ENCODE measurements at regions of chr6 and their contacts with region 1.

Region 1: DNA sequence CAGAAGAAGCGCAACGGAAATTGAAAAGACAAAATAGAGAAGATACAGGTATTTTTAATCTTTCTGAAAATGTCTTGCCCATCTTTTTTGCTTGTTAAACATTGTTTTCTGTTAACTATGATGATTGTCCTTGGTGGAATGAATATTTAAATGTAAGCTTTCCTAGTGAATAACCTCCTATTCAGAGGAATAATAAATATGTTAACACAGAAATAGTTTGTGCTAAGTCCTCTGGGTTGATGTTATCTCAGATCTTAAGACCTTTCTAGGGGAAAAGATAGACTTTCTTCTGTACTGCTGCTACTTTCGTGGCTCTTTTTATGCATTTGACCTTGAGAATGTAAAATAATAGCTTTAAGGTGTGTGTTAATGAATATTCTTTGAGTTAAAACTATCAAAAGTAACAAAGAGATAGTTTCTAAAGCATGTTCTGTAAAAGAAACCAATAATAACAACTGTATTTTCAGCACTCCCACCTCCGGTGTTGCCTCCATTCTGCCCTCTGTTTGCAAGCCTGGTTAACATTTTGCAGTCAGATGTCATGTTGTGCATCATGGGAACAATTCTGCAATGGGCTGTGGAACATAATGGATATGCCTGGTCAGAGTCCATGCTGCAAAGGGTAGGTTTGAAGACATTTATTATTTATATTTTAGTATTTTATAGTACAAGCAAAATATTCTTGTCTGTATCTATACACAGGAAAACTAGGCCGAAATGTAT is 70.2 kb downstream of the PRPH2 start:
- DNase-seq: no peak
- H3K4me3 ChIP-seq: no peak overlapping the region
- H3K27ac ChIP-seq: no peak overlapping the region
- H3K4me1 ChIP-seq: no peaks in the 10 kb centered on the region
- H3K27me3 ChIP-seq: no peaks in the 10 kb centered on the region
- CTCF ChIP-seq: no peak

Region 2: DNA sequence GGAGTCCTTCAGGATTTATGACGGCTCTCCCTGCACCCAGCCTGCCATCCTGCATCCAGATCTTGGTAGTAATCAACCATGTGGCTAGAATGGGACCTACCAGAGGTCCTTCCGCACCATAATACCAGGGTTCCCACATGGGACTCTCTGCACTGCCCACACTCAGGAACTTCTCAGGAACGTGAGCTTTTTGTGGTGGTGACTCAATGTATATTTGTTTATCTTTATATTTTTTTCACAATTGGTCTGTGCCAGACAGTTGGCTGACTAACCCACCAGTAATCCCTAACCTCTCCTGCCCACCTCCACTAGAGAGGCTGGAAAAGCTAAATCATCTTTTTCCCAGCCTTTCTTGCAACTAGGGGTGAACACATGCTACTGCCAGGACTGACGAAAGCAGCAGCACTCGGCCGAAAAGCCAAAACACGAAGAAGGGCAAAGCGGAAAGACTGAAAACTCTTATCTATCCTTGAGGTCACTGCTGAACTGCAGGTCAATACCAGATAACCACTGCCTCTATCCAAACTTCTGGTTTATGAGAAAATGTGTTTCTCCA is 313.4 kb before region 1 on chr6:
- CTCF ChIA-PET with region 1: no interaction called
- dilution Hi-C with region 1: no loop called
- in situ Hi-C with region 1: no loop called
- intact Hi-C with region 1: no loop called
- DNase-seq: peak; percentile 96
- H3K4me3 ChIP-seq: no peak overlapping the region
- H3K27ac ChIP-seq: peak overlapping the region; percentile 82
- H3K4me1 ChIP-seq: peaks cover 28% of the 10 kb centered on the region
- H3K27me3 ChIP-seq: no peaks in the 10 kb centered on the region
- CTCF ChIP-seq: no peak

Region 3: DNA sequence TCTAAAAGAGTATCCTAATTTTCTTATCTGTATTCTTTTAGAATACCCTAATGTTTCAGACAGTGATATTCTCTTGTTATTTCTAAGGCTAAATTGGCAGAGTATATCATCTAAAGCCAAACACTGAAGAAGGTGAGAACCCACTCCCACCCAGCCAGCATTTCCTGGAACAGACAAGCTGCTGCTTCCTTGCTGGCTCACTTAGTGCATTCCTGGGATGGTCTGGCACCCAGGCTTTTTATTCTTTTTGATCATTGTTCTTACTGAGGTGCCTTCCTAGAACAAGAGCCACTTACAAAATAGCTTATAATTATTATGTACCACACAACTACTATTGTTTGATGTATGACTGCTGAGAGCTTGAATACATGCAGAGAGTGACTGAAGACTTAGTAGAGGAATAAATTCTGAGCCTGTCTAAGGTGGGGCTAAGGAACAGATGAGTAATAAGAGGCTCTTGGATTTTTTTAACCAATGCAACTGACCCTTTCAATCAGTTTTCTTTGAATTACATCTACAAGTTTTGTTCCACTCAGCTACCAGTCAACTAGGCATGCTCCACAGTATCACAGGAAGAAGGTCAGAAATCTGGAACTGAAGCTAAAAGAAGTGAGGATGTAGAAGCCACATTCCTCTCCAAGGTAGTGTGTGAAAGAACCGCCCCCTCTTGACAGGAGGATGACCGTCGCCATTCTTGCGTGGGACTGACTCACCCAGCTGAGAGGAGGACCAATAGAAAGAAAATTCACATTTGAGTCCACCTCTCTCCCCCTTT is 40.1 kb after region 1 on chr6:
- CTCF ChIA-PET with region 1: no interaction called
- dilution Hi-C with region 1: loop called (anchors 5 kb)
- in situ Hi-C with region 1: no loop called
- intact Hi-C with region 1: no loop called
- DNase-seq: peak; percentile 80
- H3K4me3 ChIP-seq: no peak overlapping the region
- H3K27ac ChIP-seq: peak overlapping the region; percentile 71
- H3K4me1 ChIP-seq: peaks cover 31% of the 10 kb centered on the region
- H3K27me3 ChIP-seq: no peaks in the 10 kb centered on the region
- CTCF ChIP-seq: no peak

Region 4: GRCh38 chr6:42704241-42704936 is 52.2 kb after region 1 on chr6:
- CTCF ChIA-PET with region 1: no interaction called
- dilution Hi-C with region 1: no loop called
- in situ Hi-C with region 1: no loop called
- intact Hi-C with region 1: no loop called
- DNase-seq: no peak
- H3K4me3 ChIP-seq: no peak overlapping the region
- H3K27ac ChIP-seq: no peak overlapping the region
- H3K4me1 ChIP-seq: peaks cover 9% of the 10 kb centered on the region
- H3K27me3 ChIP-seq: no peaks in the 10 kb centered on the region
- CTCF ChIP-seq: no peak

Region 5: GRCh38 chr6:42873313-42873712 is 221.1 kb after region 1 on chr6:
- CTCF ChIA-PET with region 1: no interaction called
- dilution Hi-C with region 1: loop called (anchors 5 kb)
- in situ Hi-C with region 1: no loop called
- intact Hi-C with region 1: no loop called
- DNase-seq: no peak
- H3K4me3 ChIP-seq: no peak overlapping the region
- H3K27ac ChIP-seq: no peak overlapping the region
- H3K4me1 ChIP-seq: no peaks in the 10 kb centered on the region
- H3K27me3 ChIP-seq: no peaks in the 10 kb centered on the region
- CTCF ChIP-seq: no peak

Region 6: DNA sequence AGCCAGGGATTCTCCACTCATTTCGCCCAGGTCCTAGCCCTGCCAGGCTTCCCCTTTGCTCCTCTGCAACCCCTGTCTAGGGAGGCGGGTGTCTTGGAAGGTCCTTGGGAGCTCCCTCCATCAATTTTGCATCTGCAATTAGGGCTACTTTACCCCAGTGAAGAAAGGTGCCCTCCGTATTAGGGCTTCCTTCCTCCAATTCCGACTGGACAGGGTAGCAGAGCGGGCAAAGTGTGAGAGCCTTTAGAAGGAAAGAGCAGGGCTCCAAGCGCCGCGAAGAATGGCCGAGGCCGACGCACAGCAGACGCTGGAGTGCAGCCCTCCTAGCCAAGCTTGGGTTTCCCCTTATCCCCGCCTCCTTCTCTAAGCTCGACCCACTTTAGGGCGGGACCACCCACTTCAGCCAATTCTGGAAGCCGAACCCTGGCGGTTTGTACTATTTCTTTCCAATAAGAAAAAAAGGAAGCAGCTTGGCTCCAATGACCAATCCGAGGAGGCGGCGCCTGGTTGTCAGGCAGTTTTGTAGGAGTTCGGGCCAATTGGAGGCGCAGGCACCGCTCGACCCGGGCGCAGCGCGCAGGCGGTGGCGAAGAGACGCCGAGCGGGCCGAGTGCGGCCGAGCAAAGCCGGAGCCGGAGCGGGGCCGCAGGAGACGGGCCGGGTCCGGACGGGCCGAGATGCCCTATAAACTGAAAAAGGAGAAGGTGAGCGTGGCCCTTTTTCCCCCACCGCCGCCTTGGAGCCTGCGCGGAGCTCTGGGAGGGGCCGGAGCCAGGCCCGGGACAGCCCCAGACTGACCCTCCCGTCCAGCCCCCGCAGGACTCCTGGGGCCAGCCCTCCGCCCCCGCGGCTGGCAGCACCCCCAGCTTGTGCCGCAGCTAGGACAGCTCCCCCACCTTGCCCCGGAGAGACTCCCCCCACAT is 332.1 kb after region 1 on chr6 and contains the start of gene PPP2R5D:
- CTCF ChIA-PET with region 1: no interaction called
- dilution Hi-C with region 1: no loop called
- in situ Hi-C with region 1: no loop called
- intact Hi-C with region 1: no loop called
- DNase-seq: peak; percentile 99
- H3K4me3 ChIP-seq: peak within 1 kb of the TSS; percentile 79 to 82 (median 81)
- H3K27ac ChIP-seq: peak within 1 kb of the TSS; percentile 29
- H3K4me1 ChIP-seq: peaks cover 28% of the 10 kb centered on the region
- H3K27me3 ChIP-seq: no peaks in the 10 kb centered on the region
- CTCF ChIP-seq: no peak
- total RNA-seq, gene PPP2R5D: 32.2 to 35.6 TPM

Measured in mammary epithelial cell (primary cell).